Psoas muscle (tissue), 8 donors: ENCODE measurements at regions of chr4 and their contacts with region 1.

Region 1: GRCh38 chr4:68498413-68499007 is 51.2 kb downstream of the TMPRSS11E start:
- DNase-seq: no peak
- ATAC-seq: peak in 2 of 4 donors; percentile 58 to 69
- H3K4me3 ChIP-seq: no peak overlapping the region
- H3K27ac ChIP-seq: no peak overlapping the region
- H3K4me1 ChIP-seq: no peaks in the 10 kb centered on the region
- H3K27me3 ChIP-seq: no peaks in the 10 kb centered on the region
- CTCF ChIP-seq: peak; percentile 70

Region 2: GRCh38 chr4:68630373-68630772 is 131.9 kb after region 1 on chr4:
- intact Hi-C with region 1: loop called in 1 of 2 experiments (anchors 5 kb)
- DNase-seq: no peak
- ATAC-seq: no peak
- H3K4me3 ChIP-seq: no peak overlapping the region
- H3K27ac ChIP-seq: no peak overlapping the region
- H3K4me1 ChIP-seq: no peaks in the 10 kb centered on the region
- H3K27me3 ChIP-seq: no peaks in the 10 kb centered on the region
- CTCF ChIP-seq: no peak

Region 3: GRCh38 chr4:69167300-69167699 is 668.8 kb after region 1 on chr4:
- intact Hi-C with region 1: loop called (anchors 5 kb)
- DNase-seq: no peak
- ATAC-seq: no peak
- H3K4me3 ChIP-seq: no peak overlapping the region
- H3K27ac ChIP-seq: no peak overlapping the region
- H3K4me1 ChIP-seq: no peaks in the 10 kb centered on the region
- H3K27me3 ChIP-seq: no peaks in the 10 kb centered on the region
- CTCF ChIP-seq: no peak

Region 4: GRCh38 chr4:70041652-70042286 is 1543.3 kb after region 1 on chr4:
- intact Hi-C with region 1: no loop called
- DNase-seq: no peak
- ATAC-seq: no peak
- H3K4me3 ChIP-seq: no peak overlapping the region
- H3K27ac ChIP-seq: no peak overlapping the region
- H3K4me1 ChIP-seq: no peaks in the 10 kb centered on the region
- H3K27me3 ChIP-seq: no peaks in the 10 kb centered on the region
- CTCF ChIP-seq: no peak